PC-3 (cell line): ENCODE measurements at regions of chr5 and their contacts with region 1.

Region 1: DNA sequence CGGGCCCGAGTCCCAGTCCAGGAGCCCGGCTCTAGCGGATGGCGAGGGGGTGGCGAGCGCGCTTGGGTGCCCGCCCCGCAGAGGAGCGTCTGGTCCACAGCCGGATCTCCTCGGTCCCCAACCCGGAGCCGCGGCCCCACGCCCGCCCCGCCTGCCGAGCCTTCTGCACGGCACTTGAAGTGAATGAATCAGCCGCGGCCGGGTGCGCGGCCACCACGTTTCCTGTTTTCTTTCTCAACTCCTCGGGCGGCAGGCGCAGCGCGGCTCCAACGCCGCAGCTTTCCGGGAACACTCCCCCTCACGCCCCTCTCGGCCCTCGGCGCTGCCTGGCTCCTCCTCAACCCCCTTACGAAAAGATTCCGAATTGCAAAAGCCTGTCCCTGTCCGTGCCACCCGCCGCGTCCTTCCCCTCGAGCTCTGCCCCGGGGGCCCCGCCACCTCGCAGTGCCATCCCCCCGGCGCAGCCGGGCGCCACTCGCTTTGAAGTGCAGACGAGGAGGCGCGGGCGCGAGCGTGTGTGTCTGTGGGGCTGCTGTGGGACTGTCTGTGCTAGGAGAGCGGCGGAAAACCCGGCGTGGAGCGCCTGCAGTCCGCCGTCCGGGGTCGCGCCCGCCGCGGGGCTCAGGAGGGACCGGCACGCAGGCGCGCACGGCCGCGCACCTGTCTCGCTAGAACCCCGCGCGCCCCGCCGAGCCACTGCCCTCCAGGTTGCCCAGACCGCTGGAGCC is 456.6 kb downstream of the RAB3C start:
- DNase-seq: peak; percentile 37
- ATAC-seq: peak; percentile 14
- H3K4me3 ChIP-seq: peak overlapping the region; percentile 66
- H3K27ac ChIP-seq: no peak overlapping the region
- H3K4me1 ChIP-seq: peaks cover 54% of the 10 kb centered on the region
- H3K27me3 ChIP-seq: no peaks in the 10 kb centered on the region
- CTCF ChIP-seq: no peak

Region 2: GRCh38 chr5:58983526-58984452 is 55.7 kb before region 1 on chr5:
- CTCF ChIA-PET with region 1: no interaction called
- POLR2A ChIA-PET with region 1: no interaction called
- intact Hi-C with region 1: no loop called
- DNase-seq: no peak
- ATAC-seq: no peak
- H3K4me3 ChIP-seq: no peak overlapping the region
- H3K27ac ChIP-seq: no peak overlapping the region
- H3K4me1 ChIP-seq: peaks cover 12% of the 10 kb centered on the region
- H3K27me3 ChIP-seq: no peaks in the 10 kb centered on the region
- CTCF ChIP-seq: no peak

Region 3: GRCh38 chr5:59065551-59065950 is 26.1 kb after region 1 on chr5:
- CTCF ChIA-PET with region 1: no interaction called
- POLR2A ChIA-PET with region 1: no interaction called
- intact Hi-C with region 1: loop called (anchors 1 kb)
- DNase-seq: peak; percentile 73
- ATAC-seq: peak; percentile 37
- H3K4me3 ChIP-seq: no peak overlapping the region
- H3K27ac ChIP-seq: peak overlapping the region; percentile 94
- H3K4me1 ChIP-seq: peaks cover 66% of the 10 kb centered on the region
- H3K27me3 ChIP-seq: no peaks in the 10 kb centered on the region
- CTCF ChIP-seq: no peak

Region 4: DNA sequence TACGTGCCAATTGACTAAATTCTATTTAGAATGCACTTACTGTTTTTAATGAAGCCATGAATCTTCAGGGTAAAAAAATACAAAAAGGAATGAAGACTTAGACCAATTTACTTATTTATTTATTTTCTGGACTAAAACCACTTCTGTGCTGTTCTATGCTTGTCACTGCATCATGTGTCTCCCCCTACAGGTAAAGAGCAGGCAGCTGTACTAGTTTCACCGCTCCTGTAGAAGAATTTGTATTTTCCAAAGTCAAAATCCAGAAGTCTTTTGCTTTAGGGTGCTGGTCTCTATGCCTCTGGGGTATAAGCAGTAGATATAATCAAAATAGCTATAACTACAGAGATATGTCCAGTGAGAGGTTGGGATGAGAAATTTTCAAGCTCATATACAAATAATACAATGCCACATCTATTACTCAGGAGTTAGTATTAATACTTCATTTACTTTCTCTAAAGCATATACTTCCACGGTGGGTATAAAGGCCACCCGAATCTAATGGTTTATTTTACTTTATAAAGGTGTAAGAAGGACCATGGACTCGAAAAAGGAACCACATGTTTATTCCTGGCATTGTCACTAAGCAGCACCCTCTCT is 134.9 kb after region 1 on chr5:
- CTCF ChIA-PET with region 1: no interaction called
- POLR2A ChIA-PET with region 1: no interaction called
- intact Hi-C with region 1: loop called (anchors 1 kb)
- DNase-seq: peak; percentile 19
- ATAC-seq: peak; percentile 49; the same call in 1 of the 2 replicates
- H3K4me3 ChIP-seq: no peak overlapping the region
- H3K27ac ChIP-seq: no peak overlapping the region
- H3K4me1 ChIP-seq: no peaks in the 10 kb centered on the region
- H3K27me3 ChIP-seq: no peaks in the 10 kb centered on the region
- CTCF ChIP-seq: peak; percentile 56

Region 5: DNA sequence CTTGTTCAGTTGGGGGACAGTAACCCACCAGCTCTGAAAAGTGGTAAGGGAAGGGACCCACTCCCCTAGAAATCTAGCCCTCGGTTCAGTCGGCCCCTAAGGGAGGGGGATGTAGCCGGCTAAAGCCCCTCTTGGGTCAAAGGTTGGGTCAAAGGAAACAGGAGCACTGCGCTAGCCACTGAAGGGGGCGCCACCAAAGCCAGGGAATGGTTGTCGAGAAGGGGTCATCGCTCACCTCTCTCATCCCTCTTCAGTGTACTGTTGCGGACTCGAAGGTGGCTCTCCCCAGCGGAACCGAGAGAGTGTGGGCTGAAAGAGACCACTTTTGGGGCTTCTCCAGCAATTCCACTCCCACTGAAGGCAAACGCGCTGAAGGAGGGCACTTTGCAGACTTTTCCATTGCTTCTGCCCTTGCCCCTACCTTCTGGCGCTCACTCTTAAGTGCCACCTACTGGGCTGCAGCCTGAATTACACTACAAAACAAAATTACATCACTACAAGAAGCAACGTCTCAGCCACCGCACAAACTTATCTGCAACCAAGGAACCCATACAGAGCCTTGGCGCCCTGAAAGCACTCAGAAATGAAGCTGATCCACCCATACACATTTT is 457.2 kb after region 1 on chr5:
- CTCF ChIA-PET with region 1: no interaction called
- POLR2A ChIA-PET with region 1: no interaction called
- intact Hi-C with region 1: loop called (anchors 10 kb)
- DNase-seq: peak; percentile 39
- ATAC-seq: peak; percentile 27; the same call in 1 of the 2 replicates
- H3K4me3 ChIP-seq: no peak overlapping the region
- H3K27ac ChIP-seq: no peak overlapping the region
- H3K4me1 ChIP-seq: no peaks in the 10 kb centered on the region
- H3K27me3 ChIP-seq: no peaks in the 10 kb centered on the region
- CTCF ChIP-seq: peak; percentile 64

Region 6: GRCh38 chr5:59660737-59661136 is 621.3 kb after region 1 on chr5:
- CTCF ChIA-PET with region 1: interaction called, 4 read pairs
- POLR2A ChIA-PET with region 1: no interaction called
- intact Hi-C with region 1: loop called (anchors 10 kb)
- DNase-seq: peak; percentile 53
- ATAC-seq: peak; percentile 45; the same call in 1 of the 2 replicates
- H3K4me3 ChIP-seq: no peak overlapping the region
- H3K27ac ChIP-seq: no peak overlapping the region
- H3K4me1 ChIP-seq: peaks cover 23% of the 10 kb centered on the region
- H3K27me3 ChIP-seq: no peaks in the 10 kb centered on the region
- CTCF ChIP-seq: peak; percentile 55